Heart left ventricle (tissue), 16 donors: ENCODE measurements at regions of chr9 and their contacts with region 1.

Region 1: DNA sequence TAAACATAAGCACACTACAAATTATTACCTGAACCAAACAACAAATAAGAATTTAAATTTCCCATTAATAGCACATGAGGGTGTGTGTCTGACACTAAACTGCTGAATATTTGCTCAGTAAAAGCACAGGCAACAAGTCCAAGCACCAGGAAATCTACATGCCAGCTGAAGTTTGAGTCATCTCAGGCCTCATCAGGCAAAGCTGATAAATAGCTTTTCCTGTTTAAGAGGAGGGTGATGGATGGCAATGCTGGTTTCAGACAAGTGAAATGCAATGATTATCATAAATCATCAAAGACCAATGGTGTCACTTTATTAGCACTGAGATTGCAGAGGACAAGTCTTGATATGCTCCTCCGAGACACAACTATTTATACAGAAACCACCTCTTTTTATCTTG is 1668.0 kb upstream of the C9orf72 start:
- DNase-seq: no peak
- ATAC-seq: no peak
- H3K4me3 ChIP-seq: no peak overlapping the region
- H3K27ac ChIP-seq: no peak overlapping the region
- H3K4me1 ChIP-seq: no peaks in the 10 kb centered on the region
- H3K27me3 ChIP-seq: no peaks in the 10 kb centered on the region
- CTCF ChIP-seq: no peak
- POLR2A ChIP-seq: no peak

Region 2: DNA sequence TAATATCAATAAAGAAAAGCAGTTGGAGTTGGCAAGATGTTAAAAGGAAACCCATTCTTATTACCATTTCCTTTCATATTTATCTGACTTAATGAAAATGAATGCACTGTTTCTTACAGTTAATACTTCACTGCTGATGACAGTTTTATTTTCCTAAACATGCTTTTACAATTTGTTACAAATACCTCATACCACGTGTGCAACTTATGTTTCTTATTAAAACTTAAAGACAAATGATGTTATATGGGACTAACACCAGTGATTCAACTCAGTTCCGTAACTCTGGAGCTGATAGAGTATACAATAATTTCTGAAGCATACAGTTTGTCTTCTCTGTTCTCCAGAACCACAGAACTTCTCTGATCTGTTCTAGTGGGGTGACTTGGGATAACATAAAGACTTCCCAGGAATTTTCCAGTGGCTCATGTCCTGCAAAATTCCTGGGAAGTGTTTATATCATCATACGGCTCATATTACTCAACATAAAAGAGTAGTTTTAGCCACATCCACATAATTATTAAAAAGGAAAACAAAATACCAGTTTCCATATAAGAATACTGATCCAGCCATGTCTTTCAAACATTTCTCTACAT is 409.1 kb before region 1 on chr9:
- intact Hi-C with region 1: no loop called
- DNase-seq: no peak
- ATAC-seq: no peak
- H3K4me3 ChIP-seq: no peak overlapping the region
- H3K27ac ChIP-seq: no peak overlapping the region
- H3K4me1 ChIP-seq: no peaks in the 10 kb centered on the region
- H3K27me3 ChIP-seq: no peaks in the 10 kb centered on the region
- CTCF ChIP-seq: no peak
- POLR2A ChIP-seq: no peak

Region 3: DNA sequence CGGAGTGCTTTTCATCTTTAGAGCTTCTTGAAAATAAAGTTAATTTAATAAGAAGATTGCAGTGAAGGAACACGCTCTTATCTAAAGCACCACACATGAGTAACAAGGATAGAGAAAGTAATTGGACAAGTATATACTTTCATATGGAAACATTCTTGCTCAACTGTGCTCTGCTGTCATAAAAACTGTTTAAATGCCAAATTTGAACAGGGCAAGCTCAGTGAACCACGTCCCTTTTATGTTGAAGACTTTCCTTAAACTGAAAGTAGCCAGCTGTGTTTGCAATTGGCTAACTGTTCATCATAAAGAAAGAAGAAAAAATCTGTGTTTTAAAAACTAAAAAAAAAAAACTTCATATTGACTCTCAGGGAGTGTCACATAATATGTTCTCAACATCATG is 57.3 kb before region 1 on chr9:
- intact Hi-C with region 1: no loop called
- DNase-seq: no peak
- ATAC-seq: no peak
- H3K4me3 ChIP-seq: no peak overlapping the region
- H3K27ac ChIP-seq: no peak overlapping the region
- H3K4me1 ChIP-seq: no peaks in the 10 kb centered on the region
- H3K27me3 ChIP-seq: no peaks in the 10 kb centered on the region
- CTCF ChIP-seq: no peak
- POLR2A ChIP-seq: no peak

Region 4: GRCh38 chr9:29311221-29311620 is 69.9 kb after region 1 on chr9:
- intact Hi-C with region 1: loop called in 1 of 10 experiments (anchors 10 kb)
- DNase-seq: no peak
- ATAC-seq: no peak
- H3K4me3 ChIP-seq: no peak overlapping the region
- H3K27ac ChIP-seq: no peak overlapping the region
- H3K4me1 ChIP-seq: no peaks in the 10 kb centered on the region
- H3K27me3 ChIP-seq: no peaks in the 10 kb centered on the region
- CTCF ChIP-seq: no peak
- POLR2A ChIP-seq: no peak